Activated CD4-positive, alpha-beta T cell treated with anti-CD3 and anti-CD28 coated beads for 36 hours (primary cell): ENCODE measurements at regions of chr4 and their contacts with region 1.

Region 1: DNA sequence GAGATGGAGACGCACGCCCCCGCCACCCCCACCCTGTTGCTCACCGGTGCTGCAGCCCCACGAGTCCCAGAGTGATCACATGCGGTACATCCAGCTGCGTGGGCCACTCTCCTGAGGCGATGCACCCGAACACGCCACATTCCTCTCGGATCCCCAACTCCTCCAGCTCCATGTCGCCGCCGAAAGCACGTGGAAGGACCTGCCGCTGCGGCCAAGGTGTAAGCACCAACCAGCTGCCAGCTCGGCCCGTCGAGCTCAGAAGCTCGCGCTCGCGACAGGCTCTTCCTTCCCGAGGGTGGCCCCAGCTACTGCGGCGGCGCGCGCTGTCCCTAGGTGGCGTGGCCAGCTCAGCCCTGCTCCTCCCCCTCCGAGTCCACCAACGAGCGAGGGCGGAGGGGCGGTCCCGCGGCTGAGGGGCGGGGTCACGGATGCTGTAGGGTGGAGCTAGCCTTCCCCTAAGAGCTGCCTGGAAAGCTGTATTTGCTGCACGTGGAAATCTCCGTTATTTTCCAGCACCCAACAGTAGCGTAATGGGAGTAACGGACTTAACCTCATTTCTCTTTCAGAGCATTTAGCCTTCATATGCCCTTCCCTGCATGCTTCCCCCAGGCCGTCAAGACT is at the start of gene PPAT:
- DNase-seq: peak; percentile 99
- ATAC-seq: peak; percentile 78
- H3K4me3 Mint-ChIP-seq: peak within 1 kb of the TSS; percentile 88
- H3K27ac Mint-ChIP-seq: peak within 1 kb of the TSS; percentile 97
- H3K4me1 Mint-ChIP-seq: peaks cover 50% of the 10 kb centered on the region
- H3K27me3 Mint-ChIP-seq: no peaks in the 10 kb centered on the region
- total RNA-seq, gene PPAT: 36.8 to 48.2 TPM

Region 2: GRCh38 chr4:55635741-55636655 is 799.4 kb before region 1 on chr4 and contains the start of gene NMU:
- CTCF ChIA-PET with region 1: no interaction called
- POLR2A ChIA-PET with region 1: no interaction called
- intact Hi-C with region 1: no loop called
- DNase-seq: peak; percentile 73
- ATAC-seq: peak; percentile 90
- H3K4me3 Mint-ChIP-seq: peak within 1 kb of the TSS; percentile 47
- H3K27ac Mint-ChIP-seq: no peak within 1 kb of the TSS
- H3K4me1 Mint-ChIP-seq: peaks cover 13% of the 10 kb centered on the region
- H3K27me3 Mint-ChIP-seq: peaks cover 54% of the 10 kb centered on the region
- total RNA-seq, gene NMU: 0.30 TPM in 1 of 2 experiments, not detected in the other

Region 3: DNA sequence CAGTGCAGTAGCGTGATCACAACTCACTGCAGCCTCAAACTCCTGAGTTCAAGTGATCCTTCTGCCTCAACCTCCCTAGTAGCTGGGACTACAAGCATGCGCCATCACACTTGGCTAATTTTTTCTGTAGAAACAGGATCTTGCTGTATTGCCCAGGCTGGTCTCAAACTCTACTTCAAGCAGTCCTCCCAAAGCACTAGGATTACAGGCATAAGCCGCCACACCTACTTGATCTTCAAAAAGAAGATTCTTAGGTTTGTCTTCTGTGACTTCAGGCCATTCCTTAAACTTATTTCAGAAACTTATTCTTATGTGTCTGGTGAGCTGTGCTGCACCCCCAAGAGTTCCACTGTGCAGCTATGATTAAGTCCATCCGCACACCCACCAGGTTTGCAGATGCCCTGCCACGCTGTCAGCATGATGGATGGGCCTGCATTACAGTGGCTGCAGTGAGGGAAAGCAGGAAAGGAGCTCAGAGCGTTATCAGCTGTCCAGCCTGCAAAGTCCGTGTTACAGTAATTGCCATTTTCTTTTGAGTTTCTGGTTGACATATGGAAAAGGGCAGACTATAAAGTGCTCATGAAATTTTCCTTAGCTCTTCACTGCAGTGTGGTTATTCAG is 194.8 kb before region 1 on chr4:
- CTCF ChIA-PET with region 1: no interaction called
- POLR2A ChIA-PET with region 1: no interaction called
- intact Hi-C with region 1: no loop called
- DNase-seq: no peak
- ATAC-seq: no peak
- H3K4me3 Mint-ChIP-seq: no peak overlapping the region
- H3K27ac Mint-ChIP-seq: no peak overlapping the region
- H3K4me1 Mint-ChIP-seq: no peaks in the 10 kb centered on the region
- H3K27me3 Mint-ChIP-seq: peaks cover 8% of the 10 kb centered on the region

Region 4: GRCh38 chr4:56387023-56388001 is 48.1 kb before region 1 on chr4 and contains the start of gene AASDH:
- CTCF ChIA-PET with region 1: interaction called, 29 read pairs
- POLR2A ChIA-PET with region 1: interaction called, 51 read pairs
- intact Hi-C with region 1: loop called (anchors 1 kb)
- DNase-seq: peak; percentile 97
- ATAC-seq: peak; percentile 94
- H3K4me3 Mint-ChIP-seq: peak within 1 kb of the TSS; percentile 98
- H3K27ac Mint-ChIP-seq: peak within 1 kb of the TSS; percentile 100
- H3K4me1 Mint-ChIP-seq: peaks cover 31% of the 10 kb centered on the region
- H3K27me3 Mint-ChIP-seq: no peaks in the 10 kb centered on the region
- total RNA-seq, gene AASDH: 13.3 to 16.4 TPM

Region 5: GRCh38 chr4:56460085-56460484 is 24.7 kb after region 1 on chr4:
- CTCF ChIA-PET with region 1: interaction called, 11 read pairs
- POLR2A ChIA-PET with region 1: interaction called, 6 read pairs
- intact Hi-C with region 1: no loop called
- DNase-seq: no peak
- ATAC-seq: no peak
- H3K4me3 Mint-ChIP-seq: no peak overlapping the region
- H3K27ac Mint-ChIP-seq: peak overlapping the region; percentile 93
- H3K4me1 Mint-ChIP-seq: peaks cover 37% of the 10 kb centered on the region
- H3K27me3 Mint-ChIP-seq: no peaks in the 10 kb centered on the region

Region 6: GRCh38 chr4:56655209-56655626 is 219.8 kb after region 1 on chr4:
- CTCF ChIA-PET with region 1: no interaction called
- POLR2A ChIA-PET with region 1: no interaction called
- intact Hi-C with region 1: loop called (anchors 5 to 10 kb)
- DNase-seq: peak; percentile 43
- ATAC-seq: no peak
- H3K4me3 Mint-ChIP-seq: peak overlapping the region; percentile 86
- H3K27ac Mint-ChIP-seq: peak overlapping the region; percentile 66
- H3K4me1 Mint-ChIP-seq: peaks cover 61% of the 10 kb centered on the region
- H3K27me3 Mint-ChIP-seq: peaks cover 18% of the 10 kb centered on the region

Region 7: GRCh38 chr4:56907489-56908205 is 472.2 kb after region 1 on chr4 and contains the start of gene REST:
- CTCF ChIA-PET with region 1: no interaction called
- POLR2A ChIA-PET with region 1: interaction called, 8 read pairs
- intact Hi-C with region 1: loop called (anchors 1 to 2 kb)
- DNase-seq: peak; percentile 88
- ATAC-seq: peak; percentile 64
- H3K4me3 Mint-ChIP-seq: peak within 1 kb of the TSS; percentile 73
- H3K27ac Mint-ChIP-seq: peak within 1 kb of the TSS; percentile 72
- H3K4me1 Mint-ChIP-seq: peaks cover 38% of the 10 kb centered on the region
- H3K27me3 Mint-ChIP-seq: no peaks in the 10 kb centered on the region
- total RNA-seq, gene REST: 44.0 to 44.9 TPM